HCT116 (cell line): ENCODE measurements at regions of chr18 and their contacts with region 1.

Region 1: DNA sequence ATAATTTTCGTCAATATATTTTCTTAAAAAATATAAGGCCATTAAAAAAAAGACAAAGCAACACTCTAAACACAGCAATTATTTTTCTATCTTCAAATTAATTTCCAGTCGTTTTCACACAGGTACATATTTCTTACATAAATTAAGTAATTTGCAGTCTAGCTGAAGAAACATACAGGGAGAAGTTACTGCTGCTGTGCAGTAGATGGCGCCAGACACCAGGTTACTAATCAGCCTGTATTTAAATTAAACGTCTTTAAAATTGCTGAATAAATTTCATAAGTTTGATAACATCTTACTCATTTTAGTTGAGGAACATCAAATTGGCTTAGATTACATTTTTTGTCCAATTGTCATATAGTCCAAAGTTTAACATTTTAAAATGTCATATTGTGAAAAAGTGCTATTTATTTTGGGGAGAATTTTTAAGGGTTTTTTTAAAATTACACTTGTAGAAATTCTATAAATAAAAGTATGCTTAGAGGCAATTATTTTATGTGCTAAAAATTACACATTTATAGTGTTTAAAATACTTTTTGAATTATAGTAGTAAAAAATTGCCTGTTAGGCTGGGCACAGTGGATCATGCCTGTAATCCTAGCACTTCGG is 88.4 kb downstream of the PMAIP1 start:
- DNase-seq: peak; percentile 49
- ATAC-seq: peak; percentile 70
- H3K4me3 ChIP-seq: no peak overlapping the region
- H3K27ac ChIP-seq: no peak overlapping the region
- H3K4me1 ChIP-seq: peaks cover 0 to 31% of the 10 kb centered on the region in 2 experiments; a peak in 3 of 4 replicates
- H3K27me3 ChIP-seq: no peaks in the 10 kb centered on the region
- CTCF ChIP-seq: peak; percentile 66 to 95 (median 90); a peak in 5 of 6 replicates
- POLR2A ChIP-seq: no peak
- RAD21 ChIP-seq: peak; percentile 88

Region 2: DNA sequence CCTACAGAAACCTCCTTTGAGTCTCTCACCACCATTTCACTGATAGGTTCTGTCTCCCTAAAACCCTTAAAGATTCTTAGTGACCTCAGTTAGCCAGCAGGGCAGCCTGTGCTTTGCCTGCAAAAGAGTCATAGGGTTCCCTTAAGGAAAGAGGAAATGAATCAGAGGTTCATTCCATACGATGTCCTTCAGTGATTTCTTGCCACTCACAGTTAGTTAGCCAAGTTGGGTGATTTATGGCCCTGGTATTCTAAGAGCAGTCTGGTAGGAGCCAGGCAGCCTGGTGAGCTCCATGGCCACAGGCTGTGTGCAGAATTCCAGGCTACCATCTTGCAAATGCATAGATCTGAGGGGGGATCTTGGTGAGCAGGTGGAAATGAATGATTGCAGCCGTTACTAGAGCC is 272.2 kb before region 1 on chr18:
- CTCF ChIA-PET with region 1: no interaction called
- POLR2A ChIA-PET with region 1: no interaction called
- RAD21 ChIA-PET with region 1: no interaction called
- intact Hi-C with region 1: no loop called
- DNase-seq: peak; percentile 8
- ATAC-seq: no peak; the same call in 1 of the 2 replicates
- H3K4me3 ChIP-seq: no peak overlapping the region
- H3K27ac ChIP-seq: no peak overlapping the region
- H3K4me1 ChIP-seq: peaks cover 0 to 14% of the 10 kb centered on the region in 2 experiments; a peak in 2 of 4 replicates
- H3K27me3 ChIP-seq: peaks cover 4% of the 10 kb centered on the region; the same call in 1 of the 2 replicates
- CTCF ChIP-seq: no peak
- POLR2A ChIP-seq: no peak
- RAD21 ChIP-seq: no peak

Region 3: DNA sequence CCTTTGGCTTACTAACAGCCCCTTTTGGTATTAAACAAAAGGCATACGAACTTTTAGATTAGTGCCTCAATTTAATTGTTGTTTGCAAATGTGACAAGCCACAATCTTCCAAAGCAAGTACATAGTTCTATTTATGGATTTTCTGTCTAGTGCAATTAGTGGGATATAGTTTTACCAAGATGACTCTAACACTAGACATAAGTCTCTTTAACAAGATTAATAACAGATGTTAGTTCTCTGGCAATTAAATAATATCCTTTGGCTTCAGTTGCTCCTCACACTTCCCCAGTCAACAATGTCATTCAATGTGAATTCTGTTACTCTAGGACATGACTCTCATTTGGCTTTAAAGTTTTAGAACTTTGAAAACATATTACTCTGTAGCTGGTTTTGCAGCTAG is 401.1 kb after region 1 on chr18:
- CTCF ChIA-PET with region 1: no interaction called
- POLR2A ChIA-PET with region 1: no interaction called
- RAD21 ChIA-PET with region 1: no interaction called
- intact Hi-C with region 1: no loop called
- DNase-seq: no peak
- ATAC-seq: no peak
- H3K4me3 ChIP-seq: no peak overlapping the region
- H3K27ac ChIP-seq: no peak overlapping the region
- H3K4me1 ChIP-seq: no peaks in the 10 kb centered on the region
- H3K27me3 ChIP-seq: no peaks in the 10 kb centered on the region
- CTCF ChIP-seq: no peak
- POLR2A ChIP-seq: no peak
- RAD21 ChIP-seq: no peak

Region 4: DNA sequence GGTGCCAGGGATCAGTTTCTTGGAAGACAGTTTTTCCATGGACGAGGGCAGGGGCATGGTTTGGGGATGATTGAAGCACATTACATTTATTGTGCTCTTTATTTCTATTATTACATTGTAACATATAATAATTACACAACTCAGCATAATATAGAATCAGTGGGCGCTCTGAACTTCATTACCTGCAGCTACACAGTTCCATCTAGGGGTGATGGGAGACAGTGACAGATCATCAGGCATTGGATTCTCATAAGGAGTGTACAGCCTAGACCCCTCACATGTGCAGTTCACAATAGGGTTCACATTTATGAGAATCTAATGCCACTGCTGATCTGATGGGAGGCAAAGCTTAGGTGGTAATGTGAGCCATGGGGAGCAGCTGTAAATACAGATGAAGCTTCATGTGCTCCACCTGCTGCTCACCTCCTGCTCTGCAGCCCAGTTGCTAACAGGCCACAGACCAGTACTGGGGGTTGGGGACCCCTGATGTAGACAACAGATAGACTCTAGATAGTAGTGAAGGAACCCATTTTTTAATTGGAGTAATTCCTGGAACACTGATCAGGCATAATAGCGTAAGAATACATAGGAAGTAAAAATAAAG is 425.8 kb after region 1 on chr18:
- CTCF ChIA-PET with region 1: interaction called, 13 read pairs
- POLR2A ChIA-PET with region 1: no interaction called
- RAD21 ChIA-PET with region 1: no interaction called
- intact Hi-C with region 1: loop called (anchors 2 kb)
- DNase-seq: peak; percentile 10
- ATAC-seq: peak; percentile 92
- H3K4me3 ChIP-seq: no peak overlapping the region
- H3K27ac ChIP-seq: no peak overlapping the region
- H3K4me1 ChIP-seq: no peaks in the 10 kb centered on the region
- H3K27me3 ChIP-seq: no peaks in the 10 kb centered on the region
- CTCF ChIP-seq: peak; percentile 62 to 73 (median 68); a peak in 5 of 6 replicates
- POLR2A ChIP-seq: no peak
- RAD21 ChIP-seq: peak; percentile 60

Region 5: DNA sequence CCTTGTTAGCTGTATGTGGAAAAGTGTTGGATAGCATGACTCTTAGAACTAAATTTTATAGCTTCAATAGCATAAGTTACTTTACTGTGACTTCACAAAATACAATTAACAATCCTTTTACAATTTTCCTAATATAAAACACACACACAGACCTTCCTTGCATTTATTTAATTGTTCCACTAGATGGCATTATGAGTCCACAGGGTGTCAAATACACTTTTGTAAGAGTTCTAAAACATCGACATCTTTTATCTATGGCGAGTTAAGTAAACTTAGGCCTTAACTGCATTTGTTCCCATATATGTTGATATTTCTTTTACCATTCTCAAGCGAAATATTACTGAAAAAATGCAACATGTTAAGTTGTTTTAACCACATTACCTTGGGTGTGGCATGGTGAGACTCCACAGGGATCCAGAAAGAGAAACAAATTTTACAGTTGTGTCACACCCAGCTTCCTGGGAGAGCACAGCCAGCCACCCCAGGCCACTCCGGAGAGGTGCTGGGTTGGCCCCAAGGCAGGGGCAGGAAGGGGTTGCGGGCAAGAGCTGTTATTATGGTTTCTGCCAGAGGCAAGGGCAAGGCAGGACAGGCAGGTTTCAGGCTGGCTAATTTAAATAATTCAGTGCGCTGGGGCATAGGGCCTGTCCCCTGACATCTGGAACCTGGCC is 696.8 kb after region 1 on chr18:
- CTCF ChIA-PET with region 1: interaction called, 3 read pairs
- POLR2A ChIA-PET with region 1: no interaction called
- RAD21 ChIA-PET with region 1: no interaction called
- intact Hi-C with region 1: loop called (anchors 10 kb)
- DNase-seq: peak; percentile 19
- ATAC-seq: peak; percentile 71
- H3K4me3 ChIP-seq: no peak overlapping the region
- H3K27ac ChIP-seq: no peak overlapping the region
- H3K4me1 ChIP-seq: peaks cover 0 to 3% of the 10 kb centered on the region in 2 experiments; a peak in 1 of 4 replicates
- H3K27me3 ChIP-seq: peaks cover 3% of the 10 kb centered on the region; the same call in 1 of the 2 replicates
- CTCF ChIP-seq: peak; percentile 40 to 72 (median 51); a peak in 5 of 6 replicates
- POLR2A ChIP-seq: no peak
- RAD21 ChIP-seq: peak; percentile 76

Region 6: GRCh38 chr18:61322265-61322873 is 1334.2 kb after region 1 on chr18:
- CTCF ChIA-PET with region 1: no interaction called
- POLR2A ChIA-PET with region 1: no interaction called
- RAD21 ChIA-PET with region 1: no interaction called
- intact Hi-C with region 1: loop called (anchors 10 kb)
- DNase-seq: peak; percentile 27
- ATAC-seq: peak; percentile 99
- H3K4me3 ChIP-seq: no peak overlapping the region
- H3K27ac ChIP-seq: no peak overlapping the region
- H3K4me1 ChIP-seq: no peaks in the 10 kb centered on the region
- H3K27me3 ChIP-seq: no peaks in the 10 kb centered on the region
- CTCF ChIP-seq: peak; percentile 79 to 90 (median 87); a peak in 5 of 6 replicates
- POLR2A ChIP-seq: no peak
- RAD21 ChIP-seq: peak; percentile 79